HEK293T (cell line): ENCODE measurements at regions of chr11 and their contacts with region 1.

Region 1: GRCh38 chr11:123020968-123021367 is 39.3 kb upstream of the BSX start:
- DNase-seq: peak; percentile 73

Region 2: GRCh38 chr11:122863704-122864326 is 157.2 kb before region 1 on chr11:
- CTCF ChIA-PET with region 1: interaction called, 27 read pairs
- POLR2A ChIA-PET with region 1: no interaction called
- DNase-seq: peak; percentile 43

Region 3: GRCh38 chr11:123046473-123047259 is 25.7 kb after region 1 on chr11:
- CTCF ChIA-PET with region 1: interaction called, 10 read pairs
- POLR2A ChIA-PET with region 1: no interaction called
- DNase-seq: no peak